ENCODE measurements at regions of chr18 and their contacts with region 1.

Region 1: GRCh38 chr18:21600526-21601410 is at the start of gene ESCO1:
- DNase-seq: peak; percentile 88
- ATAC-seq: peak; percentile 80
- H3K4me3 Mint-ChIP-seq: peak within 1 kb of the TSS; percentile 96
- H3K27ac Mint-ChIP-seq: peak within 1 kb of the TSS; percentile 99
- H3K4me1 Mint-ChIP-seq: peaks cover 50% of the 10 kb centered on the region
- H3K27me3 Mint-ChIP-seq: no peaks in the 10 kb centered on the region
- CTCF ChIP-seq: peak; percentile 78
- total RNA-seq, gene ESCO1: 18.2 and 19.6 TPM in 2 replicates

Region 2: GRCh38 chr18:21111341-21112139 is 489.2 kb before region 1 on chr18 and contains the start of gene ROCK1:
- CTCF ChIA-PET with region 1: no interaction called
- POLR2A ChIA-PET with region 1: interaction called, 10 read pairs
- intact Hi-C with region 1: loop called (anchors 1 kb)
- DNase-seq: peak; percentile 98
- ATAC-seq: peak; percentile 89
- H3K4me3 Mint-ChIP-seq: no peak within 1 kb of the TSS
- H3K27ac Mint-ChIP-seq: peak within 1 kb of the TSS; percentile 97
- H3K4me1 Mint-ChIP-seq: peaks cover 13% of the 10 kb centered on the region
- H3K27me3 Mint-ChIP-seq: no peaks in the 10 kb centered on the region
- CTCF ChIP-seq: no peak
- total RNA-seq, gene ROCK1: 58.9 and 68.2 TPM in 2 replicates

Region 3: GRCh38 chr18:21612125-21612991 is 11.6 kb after region 1 on chr18 and contains the start of gene SNRPD1:
- CTCF ChIA-PET with region 1: interaction called, 59 read pairs
- POLR2A ChIA-PET with region 1: interaction called, 152 read pairs
- intact Hi-C with region 1: loop called (anchors 1 kb)
- DNase-seq: peak; percentile 95
- ATAC-seq: peak; percentile 100
- H3K4me3 Mint-ChIP-seq: peak within 1 kb of the TSS; percentile 98
- H3K27ac Mint-ChIP-seq: peak within 1 kb of the TSS; percentile 99
- H3K4me1 Mint-ChIP-seq: peaks cover 35% of the 10 kb centered on the region
- H3K27me3 Mint-ChIP-seq: no peaks in the 10 kb centered on the region
- CTCF ChIP-seq: peak; percentile 47
- total RNA-seq, gene SNRPD1: 58.1 and 60.8 TPM in 2 replicates

Region 4: GRCh38 chr18:21682371-21683051 is 81.7 kb after region 1 on chr18:
- CTCF ChIA-PET with region 1: interaction called, 7 read pairs
- POLR2A ChIA-PET with region 1: interaction called, 14 read pairs
- intact Hi-C with region 1: no loop called
- DNase-seq: no peak
- ATAC-seq: peak; percentile 54
- H3K4me3 Mint-ChIP-seq: no peak overlapping the region
- H3K27ac Mint-ChIP-seq: no peak overlapping the region
- H3K4me1 Mint-ChIP-seq: peaks cover 30% of the 10 kb centered on the region
- H3K27me3 Mint-ChIP-seq: no peaks in the 10 kb centered on the region
- CTCF ChIP-seq: no peak

Region 5: GRCh38 chr18:21857871-21858270 is 257.1 kb after region 1 on chr18:
- CTCF ChIA-PET with region 1: no interaction called
- POLR2A ChIA-PET with region 1: interaction called, 4 read pairs
- intact Hi-C with region 1: loop called (anchors 1 kb)
- DNase-seq: no peak
- ATAC-seq: peak; percentile 55
- H3K4me3 Mint-ChIP-seq: peak overlapping the region; percentile 65
- H3K27ac Mint-ChIP-seq: peak overlapping the region; percentile 81
- H3K4me1 Mint-ChIP-seq: peaks cover 34% of the 10 kb centered on the region
- H3K27me3 Mint-ChIP-seq: no peaks in the 10 kb centered on the region
- CTCF ChIP-seq: no peak